ENCODE measurements at regions of chr9 and their contacts with region 1.

Region 1: GRCh38 chr9:70484210-70485130 is 70.0 kb upstream of the KLF9 start:
- DNase-seq: peak in 5 of 14 experiments; percentile 1 to 75 (median 56)
- ATAC-seq: peak; percentile 62
- H3K4me3 ChIP-seq: no peak overlapping the region
- H3K4me3 Mint-ChIP-seq: no peak overlapping the region
- H3K27ac ChIP-seq: no peak overlapping the region
- H3K27ac Mint-ChIP-seq: no peak overlapping the region
- H3K4me1 ChIP-seq: no peaks in the 10 kb centered on the region
- H3K4me1 Mint-ChIP-seq: peaks cover 12% of the 10 kb centered on the region
- H3K27me3 ChIP-seq: no peaks in the 10 kb centered on the region
- H3K27me3 Mint-ChIP-seq: no peaks in the 10 kb centered on the region
- CTCF ChIP-seq: peak; percentile 77

Region 2: DNA sequence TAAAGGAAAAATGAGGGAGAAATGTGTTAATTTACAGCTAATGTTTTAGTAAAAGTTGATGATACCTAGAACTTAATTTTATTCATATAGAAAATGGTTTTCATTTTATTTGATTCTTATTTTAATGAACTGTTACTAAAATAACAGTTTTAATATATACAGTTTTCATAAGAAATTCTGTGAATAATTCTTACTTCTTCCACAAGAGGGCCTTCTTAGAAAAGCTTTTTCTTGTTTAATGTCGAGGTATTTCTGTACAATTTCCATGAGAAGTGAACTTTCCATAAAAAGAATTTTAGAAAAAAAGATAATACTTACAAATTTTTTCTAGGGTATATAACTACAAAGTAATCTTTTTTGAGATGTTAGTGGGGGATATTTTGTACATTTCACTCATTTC is 143.9 kb before region 1 on chr9:
- CTCF ChIA-PET with region 1: no interaction called
- POLR2A ChIA-PET with region 1: no interaction called
- intact Hi-C with region 1: loop called in 1 of 2 experiments (anchors 5 kb)
- DNase-seq: peak in 3 of 14 experiments; percentile 38 to 52 (median 42)
- ATAC-seq: no peak
- H3K4me3 ChIP-seq: no peak overlapping the region
- H3K4me3 Mint-ChIP-seq: no peak overlapping the region
- H3K27ac ChIP-seq: no peak overlapping the region
- H3K27ac Mint-ChIP-seq: no peak overlapping the region
- H3K4me1 ChIP-seq: no peaks in the 10 kb centered on the region
- H3K4me1 Mint-ChIP-seq: peaks cover 7% of the 10 kb centered on the region
- H3K27me3 ChIP-seq: no peaks in the 10 kb centered on the region
- H3K27me3 Mint-ChIP-seq: no peaks in the 10 kb centered on the region
- CTCF ChIP-seq: peak; percentile 66

Region 3: DNA sequence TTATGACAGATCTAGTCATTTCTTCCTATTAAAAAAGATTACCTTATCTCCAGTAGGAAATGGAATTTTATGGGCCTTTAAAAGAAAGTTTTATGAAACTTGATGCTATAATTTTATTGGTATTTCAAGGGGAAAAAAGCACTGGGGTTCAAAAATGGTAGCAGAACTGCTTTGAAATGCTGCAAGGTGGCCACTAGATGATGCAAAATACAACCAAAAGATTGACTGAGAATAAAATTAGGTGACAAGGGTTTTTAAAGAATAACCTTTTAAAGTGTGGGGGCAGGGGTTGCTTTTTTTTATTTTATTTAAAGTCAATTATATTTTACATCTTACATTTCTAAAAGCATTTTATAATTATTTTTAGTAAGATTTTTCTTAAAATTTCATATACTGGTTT is 131.7 kb before region 1 on chr9:
- CTCF ChIA-PET with region 1: interaction called, 4 read pairs
- POLR2A ChIA-PET with region 1: no interaction called
- intact Hi-C with region 1: loop called (anchors 2 kb)
- DNase-seq: peak in 3 of 14 experiments; percentile 43 to 52 (median 51)
- ATAC-seq: no peak
- H3K4me3 ChIP-seq: no peak overlapping the region
- H3K4me3 Mint-ChIP-seq: no peak overlapping the region
- H3K27ac ChIP-seq: no peak overlapping the region
- H3K27ac Mint-ChIP-seq: no peak overlapping the region
- H3K4me1 ChIP-seq: no peaks in the 10 kb centered on the region
- H3K4me1 Mint-ChIP-seq: no peaks in the 10 kb centered on the region
- H3K27me3 ChIP-seq: no peaks in the 10 kb centered on the region
- H3K27me3 Mint-ChIP-seq: no peaks in the 10 kb centered on the region
- CTCF ChIP-seq: peak; percentile 80

Region 4: GRCh38 chr9:70398145-70398556 is 86.3 kb before region 1 on chr9:
- CTCF ChIA-PET with region 1: no interaction called
- POLR2A ChIA-PET with region 1: no interaction called
- intact Hi-C with region 1: loop called in 1 of 2 experiments (anchors 5 kb)
- DNase-seq: peak in 3 of 14 experiments; percentile 66 to 84 (median 70)
- ATAC-seq: peak; percentile 90
- H3K4me3 ChIP-seq: peak overlapping the region; percentile 7
- H3K4me3 Mint-ChIP-seq: peak overlapping the region; percentile 57
- H3K27ac ChIP-seq: peak overlapping the region; percentile 47 to 51
- H3K27ac Mint-ChIP-seq: peak overlapping the region; percentile 74
- H3K4me1 ChIP-seq: peaks cover 67% of the 10 kb centered on the region
- H3K4me1 Mint-ChIP-seq: peaks cover 75% of the 10 kb centered on the region
- H3K27me3 ChIP-seq: no peaks in the 10 kb centered on the region
- H3K27me3 Mint-ChIP-seq: no peaks in the 10 kb centered on the region
- CTCF ChIP-seq: no peak

Region 5: GRCh38 chr9:70419546-70420266 is 64.8 kb before region 1 on chr9:
- CTCF ChIA-PET with region 1: interaction called, 3 read pairs
- POLR2A ChIA-PET with region 1: interaction called, 16 read pairs
- intact Hi-C with region 1: loop called (anchors 2 to 5 kb)
- DNase-seq: peak; percentile 77 to 94 (median 85)
- ATAC-seq: peak; percentile 55
- H3K4me3 ChIP-seq: peak overlapping the region; percentile 70
- H3K4me3 Mint-ChIP-seq: peak overlapping the region; percentile 97
- H3K27ac ChIP-seq: peak overlapping the region; percentile 94 to 98
- H3K27ac Mint-ChIP-seq: peak overlapping the region; percentile 100
- H3K4me1 ChIP-seq: peaks cover 49% of the 10 kb centered on the region
- H3K4me1 Mint-ChIP-seq: peaks cover 55% of the 10 kb centered on the region
- H3K27me3 ChIP-seq: no peaks in the 10 kb centered on the region
- H3K27me3 Mint-ChIP-seq: no peaks in the 10 kb centered on the region
- CTCF ChIP-seq: no peak

Region 6: DNA sequence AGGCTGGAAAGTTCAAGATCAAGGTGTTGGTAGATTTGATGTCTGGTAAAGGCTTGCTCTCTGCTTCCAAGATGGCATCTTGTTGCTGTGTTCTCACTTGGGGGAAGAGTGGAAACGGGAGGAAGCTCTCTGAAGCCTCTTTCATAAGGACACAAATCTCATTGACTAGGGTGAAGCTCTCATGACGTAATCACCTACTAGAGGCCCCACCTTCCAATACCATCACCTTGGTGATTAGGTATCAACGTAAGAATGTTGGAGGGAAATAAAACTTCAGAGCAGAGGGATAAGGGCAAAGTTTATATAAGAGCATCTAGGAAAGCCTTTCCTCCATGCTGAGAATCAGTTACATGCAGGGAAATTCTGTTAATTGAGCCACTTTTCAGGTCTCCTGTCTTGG is 54.6 kb before region 1 on chr9:
- CTCF ChIA-PET with region 1: no interaction called
- POLR2A ChIA-PET with region 1: no interaction called
- intact Hi-C with region 1: no loop called
- DNase-seq: no peak
- ATAC-seq: no peak
- H3K4me3 ChIP-seq: no peak overlapping the region
- H3K4me3 Mint-ChIP-seq: no peak overlapping the region
- H3K27ac ChIP-seq: no peak overlapping the region
- H3K27ac Mint-ChIP-seq: no peak overlapping the region
- H3K4me1 ChIP-seq: no peaks in the 10 kb centered on the region
- H3K4me1 Mint-ChIP-seq: peaks cover 2% of the 10 kb centered on the region
- H3K27me3 ChIP-seq: no peaks in the 10 kb centered on the region
- H3K27me3 Mint-ChIP-seq: no peaks in the 10 kb centered on the region
- CTCF ChIP-seq: no peak